AG04450 (cell line): ENCODE measurements at regions of chr5 and their contacts with region 1.

Region 1: GRCh38 chr5:154945695-154946301 is 4.9 kb downstream of the MRPL22 start:
- DNase-seq: no peak
- H3K4me3 ChIP-seq: no peak overlapping the region
- H3K27ac ChIP-seq: no peak overlapping the region
- H3K27me3 ChIP-seq: no peaks in the 10 kb centered on the region
- CTCF ChIP-seq: peak; percentile 69

Region 2: DNA sequence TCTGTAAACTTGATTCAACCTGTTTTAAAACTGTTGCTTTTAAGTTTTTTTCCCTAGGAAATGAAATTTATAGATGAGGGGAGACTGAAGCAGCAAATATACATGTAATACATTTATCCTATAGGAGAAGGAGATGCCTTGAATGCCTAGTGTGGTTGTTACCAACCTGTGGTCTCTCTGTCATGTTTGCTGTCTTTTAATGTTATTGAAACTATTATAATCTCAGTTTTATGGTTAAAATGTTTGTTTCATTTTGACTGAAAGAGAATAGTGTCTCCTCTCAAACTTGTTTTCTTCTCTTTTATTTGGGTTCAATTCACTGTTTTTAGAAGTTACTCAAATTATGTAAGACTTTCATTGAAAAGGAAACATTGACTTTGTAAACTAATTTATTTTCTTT is 10.9 kb after region 1 on chr5:
- CTCF ChIA-PET with region 1: interaction called, 15 read pairs
- POLR2A ChIA-PET with region 1: no interaction called
- DNase-seq: no peak
- H3K4me3 ChIP-seq: no peak overlapping the region
- H3K27ac ChIP-seq: no peak overlapping the region
- H3K27me3 ChIP-seq: no peaks in the 10 kb centered on the region
- CTCF ChIP-seq: no peak

Region 3: GRCh38 chr5:154962494-154962893 is 16.7 kb after region 1 on chr5:
- CTCF ChIA-PET with region 1: interaction called, 15 read pairs
- POLR2A ChIA-PET with region 1: no interaction called
- DNase-seq: no peak
- H3K4me3 ChIP-seq: no peak overlapping the region
- H3K27ac ChIP-seq: no peak overlapping the region
- H3K27me3 ChIP-seq: no peaks in the 10 kb centered on the region
- CTCF ChIP-seq: no peak

Region 4: DNA sequence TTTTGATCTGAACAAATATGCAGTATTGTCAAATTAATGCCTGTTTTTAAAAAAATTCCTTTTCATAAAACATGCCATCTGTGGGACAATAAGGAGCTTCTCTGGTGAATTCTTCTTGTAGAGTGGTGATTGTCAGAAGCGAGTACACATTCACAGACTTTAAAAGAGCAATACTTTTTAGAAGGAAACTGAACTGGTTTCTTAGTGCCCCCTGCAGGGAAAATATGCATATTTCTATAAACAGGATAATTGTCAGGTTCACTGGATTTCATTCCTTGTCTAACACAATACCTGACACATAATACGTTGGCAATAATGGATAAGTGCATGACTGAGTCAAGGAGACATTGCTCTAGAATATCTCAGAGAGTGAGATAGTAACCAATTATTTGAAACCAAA is 201.4 kb after region 1 on chr5:
- CTCF ChIA-PET with region 1: interaction called, 16 read pairs
- POLR2A ChIA-PET with region 1: no interaction called
- DNase-seq: no peak
- H3K4me3 ChIP-seq: no peak overlapping the region
- H3K27ac ChIP-seq: no peak overlapping the region
- H3K27me3 ChIP-seq: no peaks in the 10 kb centered on the region
- CTCF ChIP-seq: 0 out of 2 replicates have a peak, but pooled peaks have one; percentile 17